Mammary epithelial cell (primary cell): ENCODE measurements at regions of chr2 and their contacts with region 1.

Region 1: DNA sequence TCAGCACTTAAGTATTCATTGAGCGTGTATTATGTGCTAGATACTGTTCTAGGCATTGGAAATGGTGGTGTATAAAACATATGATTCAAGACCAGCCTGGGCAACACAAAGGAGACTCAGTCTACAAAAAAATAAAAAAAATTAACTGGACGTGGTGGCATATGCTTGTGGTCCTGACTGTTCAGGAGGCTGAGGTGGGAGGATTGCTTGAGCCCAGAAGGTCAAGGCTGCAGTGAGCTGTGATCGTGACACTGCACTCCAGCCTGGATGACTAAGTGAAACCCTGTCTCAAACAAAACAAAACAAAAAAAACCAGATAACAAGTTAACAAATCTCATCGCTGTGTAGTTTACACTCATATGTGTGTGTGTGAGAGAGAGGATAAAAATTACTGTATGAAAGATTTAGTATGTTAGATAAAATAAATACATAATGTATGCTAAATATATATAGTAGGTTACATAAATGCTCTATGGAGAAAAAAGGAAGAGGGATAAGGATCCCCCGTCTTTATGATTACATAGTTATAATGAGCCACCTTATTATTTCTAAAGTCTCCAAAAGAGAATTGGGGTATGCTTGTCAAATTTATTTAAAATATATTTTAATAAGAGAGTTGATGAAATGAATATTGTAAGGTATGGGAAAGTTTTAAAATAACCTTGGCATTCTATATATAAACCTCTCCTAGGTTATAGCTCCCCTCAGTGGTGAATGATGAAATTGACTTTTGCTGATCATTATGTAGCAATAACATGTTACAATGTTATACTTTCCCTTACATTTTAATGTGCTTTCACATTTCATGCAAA is 69.2 kb downstream of the EHBP1 start:
- DNase-seq: peak; percentile 46
- H3K4me3 ChIP-seq: no peak overlapping the region
- H3K27ac ChIP-seq: peak overlapping the region; percentile 40
- H3K4me1 ChIP-seq: no peaks in the 10 kb centered on the region
- H3K27me3 ChIP-seq: no peaks in the 10 kb centered on the region
- CTCF ChIP-seq: peak; percentile 71

Region 2: DNA sequence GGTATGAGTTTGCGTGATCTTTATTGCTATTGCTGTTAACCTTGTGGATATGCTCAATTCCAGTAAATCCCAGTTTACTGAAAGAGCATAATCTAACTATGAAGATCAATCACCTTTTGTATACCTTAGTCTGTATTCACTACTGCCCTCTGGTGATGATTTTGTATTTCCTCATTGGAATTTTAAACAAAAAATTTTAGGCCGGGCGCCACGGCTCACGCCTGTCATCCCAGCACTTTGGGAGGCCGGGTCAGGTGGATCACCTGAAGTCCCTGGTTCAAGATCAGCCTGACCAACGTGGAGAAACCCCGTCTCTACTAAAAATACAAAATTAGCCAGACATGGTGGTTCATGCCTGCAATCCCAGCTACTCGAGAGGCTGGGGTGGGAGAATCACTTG is 864.2 kb before region 1 on chr2:
- CTCF ChIA-PET with region 1: no interaction called
- dilution Hi-C with region 1: no loop called
- in situ Hi-C with region 1: no loop called
- intact Hi-C with region 1: loop called (anchors 10 kb)
- DNase-seq: no peak
- H3K4me3 ChIP-seq: no peak overlapping the region
- H3K27ac ChIP-seq: no peak overlapping the region
- H3K4me1 ChIP-seq: no peaks in the 10 kb centered on the region
- H3K27me3 ChIP-seq: no peaks in the 10 kb centered on the region
- CTCF ChIP-seq: peak; percentile 4 to 43

Region 3: GRCh38 chr2:62505750-62506420 is 268.9 kb before region 1 on chr2 and contains the start of gene TMEM17:
- CTCF ChIA-PET with region 1: no interaction called
- dilution Hi-C with region 1: no loop called
- in situ Hi-C with region 1: no loop called
- intact Hi-C with region 1: loop called (anchors 2 kb)
- DNase-seq: peak; percentile 86
- H3K4me3 ChIP-seq: peak within 1 kb of the TSS; percentile 62 to 83 (median 63)
- H3K27ac ChIP-seq: peak within 1 kb of the TSS; percentile 90
- H3K4me1 ChIP-seq: peaks cover 20% of the 10 kb centered on the region
- H3K27me3 ChIP-seq: no peaks in the 10 kb centered on the region
- CTCF ChIP-seq: no peak
- total RNA-seq, gene TMEM17: 3.0 to 3.9 TPM

Region 4: DNA sequence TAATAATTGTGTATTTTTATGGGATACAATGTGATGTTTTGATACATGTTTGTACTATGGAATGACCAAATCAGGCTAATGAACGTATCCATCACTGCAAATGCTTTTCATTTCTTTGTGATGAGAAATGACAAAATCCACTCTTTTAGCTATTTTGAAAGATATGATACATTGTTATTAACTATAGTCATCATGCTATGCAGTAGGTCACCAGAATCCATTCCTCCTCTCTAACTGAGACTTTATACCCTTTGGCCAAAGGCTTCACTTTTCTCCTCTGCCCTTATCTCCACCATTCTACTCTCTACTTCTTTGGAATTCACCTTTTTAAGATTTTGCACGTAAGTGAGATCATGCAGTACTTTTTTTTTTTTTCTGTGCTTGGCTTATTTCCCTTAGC is 224.3 kb before region 1 on chr2:
- CTCF ChIA-PET with region 1: no interaction called
- dilution Hi-C with region 1: no loop called
- in situ Hi-C with region 1: no loop called
- intact Hi-C with region 1: no loop called
- DNase-seq: no peak
- H3K4me3 ChIP-seq: no peak overlapping the region
- H3K27ac ChIP-seq: no peak overlapping the region
- H3K4me1 ChIP-seq: no peaks in the 10 kb centered on the region
- H3K27me3 ChIP-seq: no peaks in the 10 kb centered on the region
- CTCF ChIP-seq: no peak

Region 5: GRCh38 chr2:62724886-62725711 is 49.7 kb before region 1 on chr2:
- CTCF ChIA-PET with region 1: no interaction called
- dilution Hi-C with region 1: no loop called
- in situ Hi-C with region 1: no loop called
- intact Hi-C with region 1: no loop called
- DNase-seq: no peak
- H3K4me3 ChIP-seq: no peak overlapping the region
- H3K27ac ChIP-seq: no peak overlapping the region
- H3K4me1 ChIP-seq: no peaks in the 10 kb centered on the region
- H3K27me3 ChIP-seq: no peaks in the 10 kb centered on the region
- CTCF ChIP-seq: peak; percentile 20 to 23